GM12878 (cell line): ENCODE measurements at regions of chr11 and their contacts with region 1.

Region 1: GRCh38 chr11:94493281-94494125 is at the starts of genes ANKRD49 and MRE11:
- DNase-seq: peak; percentile 96
- ATAC-seq: peak; percentile 99
- H3K4me3 ChIP-seq: peak within 1 kb of the TSS; percentile 92
- H3K27ac ChIP-seq: peak within 1 kb of the TSS; percentile 81
- H3K4me1 ChIP-seq: peaks cover 3% of the 10 kb centered on the region; the same call in 1 of the 2 replicates
- H3K27me3 ChIP-seq: no peaks in the 10 kb centered on the region
- CTCF ChIP-seq: no peak
- EP300 ChIP-seq: no peak
- POLR2A ChIP-seq: peak; percentile 86
- RAD21 ChIP-seq: no peak
- polyA plus RNA-seq, gene ANKRD49: 33.2 to 37.1 TPM
- polyA plus RNA-seq, gene MRE11: 19.3 to 20.5 TPM

Region 2: GRCh38 chr11:94128746-94129511 is 364.6 kb before region 1 on chr11 and contains the start of gene PANX1:
- CTCF ChIA-PET with region 1: no interaction called
- POLR2A ChIA-PET with region 1: no interaction called
- RAD21 ChIA-PET with region 1: no interaction called
- SMC1A ChIA-PET with region 1: no interaction called
- in situ Hi-C with region 1: no loop called
- intact Hi-C with region 1: loop called (anchors 5 kb)
- DNase-seq: no peak
- ATAC-seq: peak; percentile 87
- H3K4me3 ChIP-seq: peak within 1 kb of the TSS; percentile 86
- H3K27ac ChIP-seq: peak within 1 kb of the TSS; percentile 72
- H3K4me1 ChIP-seq: peaks cover 10% of the 10 kb centered on the region
- H3K27me3 ChIP-seq: no peaks in the 10 kb centered on the region
- CTCF ChIP-seq: no peak
- EP300 ChIP-seq: no peak
- POLR2A ChIP-seq: peak; percentile 83
- RAD21 ChIP-seq: no peak
- polyA plus RNA-seq, gene PANX1: 3.3 to 3.5 TPM

Region 3: GRCh38 chr11:94472916-94473799 is 20.3 kb before region 1 on chr11:
- CTCF ChIA-PET with region 1: interaction called, 5 read pairs
- POLR2A ChIA-PET with region 1: interaction called, 6 read pairs
- RAD21 ChIA-PET with region 1: interaction called, 12 read pairs
- SMC1A ChIA-PET with region 1: interaction called, 12 read pairs
- in situ Hi-C with region 1: no loop called
- intact Hi-C with region 1: loop called (anchors 2 kb)
- DNase-seq: peak; percentile 88
- ATAC-seq: peak; percentile 82
- H3K4me3 ChIP-seq: peak overlapping the region; percentile 11; the same call in 1 of the 2 replicates
- H3K27ac ChIP-seq: peak overlapping the region; percentile 69
- H3K4me1 ChIP-seq: peaks cover 48% of the 10 kb centered on the region
- H3K27me3 ChIP-seq: no peaks in the 10 kb centered on the region
- CTCF ChIP-seq: no peak
- EP300 ChIP-seq: peak; percentile 96 to 97
- POLR2A ChIP-seq: no peak
- RAD21 ChIP-seq: no peak

Region 4: GRCh38 chr11:94630221-94630620 is 136.7 kb after region 1 on chr11:
- CTCF ChIA-PET with region 1: no interaction called
- POLR2A ChIA-PET with region 1: no interaction called
- RAD21 ChIA-PET with region 1: no interaction called
- SMC1A ChIA-PET with region 1: no interaction called
- in situ Hi-C with region 1: no loop called
- intact Hi-C with region 1: no loop called
- DNase-seq: no peak
- ATAC-seq: no peak
- H3K4me3 ChIP-seq: no peak overlapping the region
- H3K27ac ChIP-seq: no peak overlapping the region
- H3K4me1 ChIP-seq: no peaks in the 10 kb centered on the region
- H3K27me3 ChIP-seq: no peaks in the 10 kb centered on the region
- CTCF ChIP-seq: no peak
- EP300 ChIP-seq: no peak
- POLR2A ChIP-seq: no peak
- RAD21 ChIP-seq: no peak